ENCODE measurements at regions of chr19 and their contacts with region 1.

Region 1: GRCh38 chr19:14183741-14184350 is 22.1 kb downstream of the ADGRL1 start:
- DNase-seq: peak; percentile 84
- H3K4me3 ChIP-seq: no peak overlapping the region
- H3K27ac ChIP-seq: peak overlapping the region; percentile 45
- H3K4me1 ChIP-seq: peaks cover 30% of the 10 kb centered on the region
- H3K27me3 ChIP-seq: no peaks in the 10 kb centered on the region
- CTCF ChIP-seq: no peak

Region 2: DNA sequence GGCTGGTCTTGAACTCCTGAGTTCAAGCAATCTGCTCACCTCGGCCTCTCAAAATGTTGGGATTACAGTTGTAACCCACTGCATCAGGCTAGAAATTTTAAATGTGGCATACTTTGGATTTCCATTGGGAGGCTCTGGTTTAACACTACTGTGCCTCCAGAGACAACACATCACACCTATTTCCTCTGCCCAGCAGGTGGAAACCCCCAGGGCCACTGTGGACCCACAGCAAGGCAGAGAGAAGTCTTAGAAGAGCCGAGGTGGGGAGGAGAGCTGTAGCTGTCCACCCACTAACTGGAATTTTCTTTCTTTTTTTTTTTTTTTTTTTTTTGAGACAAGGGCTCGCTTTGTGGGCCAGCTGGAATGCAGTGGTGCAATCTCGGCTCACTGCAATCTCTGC is 994.2 kb before region 1 on chr19:
- CTCF ChIA-PET with region 1: interaction called, 10 read pairs
- POLR2A ChIA-PET with region 1: no interaction called
- intact Hi-C with region 1: no loop called
- DNase-seq: no peak
- H3K4me3 ChIP-seq: no peak overlapping the region
- H3K27ac ChIP-seq: no peak overlapping the region
- H3K4me1 ChIP-seq: no peaks in the 10 kb centered on the region
- H3K27me3 ChIP-seq: no peaks in the 10 kb centered on the region
- CTCF ChIP-seq: no peak

Measured in A673 (cell line).